ENCODE measurements at regions of chr17 and their contacts with region 1.

Region 1: GRCh38 chr17:40608061-40608588 is 39.5 kb downstream of the SMARCE1 start:
- DNase-seq: peak in 7 of 14 experiments; percentile 37 to 92 (median 52)
- ATAC-seq: peak; percentile 55
- H3K4me3 ChIP-seq: peak overlapping the region; percentile 17
- H3K4me3 Mint-ChIP-seq: peak overlapping the region; percentile 73
- H3K27ac ChIP-seq: peak overlapping the region; percentile 97 to 99
- H3K27ac Mint-ChIP-seq: peak overlapping the region; percentile 98
- H3K4me1 ChIP-seq: peaks cover 97% of the 10 kb centered on the region
- H3K4me1 Mint-ChIP-seq: peaks cover 95% of the 10 kb centered on the region
- H3K27me3 ChIP-seq: no peaks in the 10 kb centered on the region
- H3K27me3 Mint-ChIP-seq: no peaks in the 10 kb centered on the region
- CTCF ChIP-seq: no peak

Region 2: GRCh38 chr17:40564883-40565768 is 43.0 kb before region 1 on chr17 and contains the start of gene CCR7:
- CTCF ChIA-PET with region 1: interaction called, 288 read pairs
- POLR2A ChIA-PET with region 1: interaction called, 1,290 read pairs
- intact Hi-C with region 1: loop called in 1 of 2 experiments (anchors 1 kb)
- DNase-seq: peak; percentile 86 to 94 (median 90)
- ATAC-seq: peak; percentile 45
- H3K4me3 ChIP-seq: peak within 1 kb of the TSS; percentile 97
- H3K4me3 Mint-ChIP-seq: peak within 1 kb of the TSS; percentile 91
- H3K27ac ChIP-seq: peak within 1 kb of the TSS; percentile 92 to 100
- H3K27ac Mint-ChIP-seq: peak within 1 kb of the TSS; percentile 92
- H3K4me1 ChIP-seq: peaks cover 82% of the 10 kb centered on the region
- H3K4me1 Mint-ChIP-seq: peaks cover 80% of the 10 kb centered on the region
- H3K27me3 ChIP-seq: no peaks in the 10 kb centered on the region
- H3K27me3 Mint-ChIP-seq: no peaks in the 10 kb centered on the region
- CTCF ChIP-seq: peak; percentile 25
- total RNA-seq, gene CCR7: 170 to 180 TPM

Measured in CD4-positive, alpha-beta T cell (primary cell).